ENCODE measurements at regions of chr12 and their contacts with region 1.

Region 1: DNA sequence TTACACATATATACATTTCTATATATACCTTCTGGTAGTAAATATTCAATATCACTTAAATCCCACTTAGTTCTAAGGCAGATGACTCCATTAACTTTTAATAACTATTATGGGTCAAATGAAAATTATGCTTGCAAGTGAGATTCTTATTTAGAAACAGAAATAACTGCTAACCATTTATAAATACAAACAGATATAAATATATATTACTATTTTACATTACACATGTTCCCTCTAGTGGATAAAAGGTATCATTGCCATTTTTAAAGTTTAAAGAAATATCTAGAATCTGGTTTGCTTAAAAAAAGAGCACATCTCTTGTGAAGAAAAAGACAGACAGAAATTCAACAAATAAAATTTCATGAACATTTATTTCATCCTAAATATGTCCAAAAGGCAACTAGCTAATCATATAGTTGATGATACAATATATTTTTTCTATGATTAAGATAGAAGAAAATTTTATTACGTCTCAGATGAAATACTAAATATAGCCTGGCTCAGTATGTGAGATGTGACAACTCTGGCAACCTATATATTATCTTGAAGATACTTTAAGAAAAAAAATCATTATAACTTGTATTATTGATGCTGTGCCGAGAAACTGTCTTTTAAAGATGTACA is 11.7 kb upstream of the RAD51AP1 start:
- DNase-seq: no peak

Region 2: DNA sequence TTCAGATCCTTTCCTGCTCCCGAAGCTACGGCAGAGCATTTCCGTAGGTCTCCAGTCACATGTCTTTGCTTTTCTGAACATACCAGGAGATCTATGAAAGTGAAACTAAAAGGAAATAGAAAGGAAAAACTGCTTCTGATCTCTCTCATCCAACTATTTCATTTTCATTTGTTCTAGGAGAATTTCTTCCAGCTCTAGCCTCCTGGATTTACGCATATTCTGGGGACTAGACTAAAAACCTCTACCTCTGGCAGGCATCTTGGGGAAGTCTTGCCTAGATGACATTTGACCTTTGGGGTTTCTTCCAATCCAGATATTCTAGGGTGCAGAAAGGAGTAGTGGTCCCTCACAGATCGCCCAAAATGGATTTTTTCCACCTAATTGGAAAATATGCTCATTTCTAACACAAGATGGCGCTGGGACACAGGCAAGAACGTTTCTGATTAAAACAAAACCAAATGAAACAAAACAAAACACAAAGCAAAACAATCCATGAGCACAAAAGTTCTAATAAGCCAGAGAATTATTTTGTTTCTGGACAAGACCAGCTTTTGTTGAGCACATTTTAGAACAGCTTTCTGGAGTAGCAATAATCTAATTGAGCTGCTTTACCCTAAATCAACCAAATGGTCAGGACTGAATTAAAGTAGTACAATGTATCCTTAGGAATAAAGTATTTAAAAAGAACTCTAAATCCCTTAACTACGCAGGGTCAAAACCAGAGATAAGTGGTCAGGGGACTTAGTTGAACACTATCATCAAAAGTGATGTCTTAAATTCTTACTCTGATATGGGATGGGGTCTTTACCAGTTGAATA is 641.5 kb before region 1 on chr12:
- intact Hi-C with region 1: loop called (anchors 10 kb)
- DNase-seq: no peak

Region 3: DNA sequence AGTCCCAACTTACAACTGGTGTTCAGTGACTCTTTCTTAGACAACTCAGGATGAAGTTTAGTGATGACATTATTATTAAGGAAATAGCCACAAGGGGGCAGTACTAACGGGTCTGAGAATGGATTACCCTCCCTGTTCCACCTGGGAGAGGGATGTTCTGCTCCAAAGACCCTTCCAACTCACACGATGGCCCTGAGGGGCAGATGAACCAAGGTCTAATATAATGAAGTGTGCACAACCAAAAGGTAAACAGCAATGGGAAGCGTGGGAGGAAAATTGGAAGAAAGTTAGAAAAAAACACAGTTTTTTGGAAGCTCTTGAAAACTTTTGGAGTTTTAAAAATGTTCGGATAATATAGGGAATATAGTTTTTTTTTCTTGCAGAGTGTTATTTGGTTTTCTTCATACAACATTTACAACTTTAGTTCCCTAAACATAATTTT is 105.4 kb before region 1 on chr12:
- intact Hi-C with region 1: loop called (anchors 2 kb)
- DNase-seq: no peak

Measured in cardiac septum (tissue), 1 donor.